Right cardiac atrium (tissue), 5 donors: ENCODE measurements at regions of chr16 and their contacts with region 1.

Region 1: GRCh38 chr16:8173111-8173644 is 417.1 kb downstream of the TMEM114 start:
- DNase-seq: peak; percentile 70 to 79 (median 77)
- ATAC-seq: peak in 1 of 2 donors; percentile 66
- H3K4me3 ChIP-seq: no peak overlapping the region
- H3K27ac ChIP-seq: no peak overlapping the region
- H3K4me1 ChIP-seq: no peaks in the 10 kb centered on the region
- H3K27me3 ChIP-seq: no peaks in the 10 kb centered on the region

Region 2: DNA sequence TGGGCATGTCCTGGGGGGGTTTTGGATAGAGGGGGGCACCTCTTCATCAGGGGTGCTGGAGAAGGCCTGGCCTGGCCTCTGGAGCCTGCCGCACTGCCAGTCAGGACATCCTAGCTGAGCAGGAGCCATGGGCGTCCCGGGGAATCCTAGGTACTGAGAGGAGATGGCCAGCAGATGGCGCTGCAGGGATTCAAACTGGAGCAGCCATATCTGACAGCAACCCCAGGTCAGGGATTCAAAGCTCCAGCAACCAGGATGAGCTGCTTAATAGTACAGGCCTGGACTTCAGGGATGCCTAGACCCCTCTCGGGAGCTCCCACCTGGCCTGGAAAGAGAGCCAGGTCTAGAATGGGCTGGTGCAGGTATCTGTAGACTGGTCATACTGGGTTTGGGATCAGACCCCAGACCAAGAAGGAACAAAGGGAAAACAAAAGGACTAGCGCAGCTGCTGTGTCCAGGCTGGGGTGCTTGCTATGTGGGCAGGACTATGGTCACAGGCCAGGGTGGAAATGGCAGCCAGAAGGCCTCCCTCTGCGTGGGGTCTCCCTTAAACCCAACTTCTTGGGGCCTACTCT is 1147.5 kb before region 1 on chr16:
- intact Hi-C with region 1: loop called in 1 of 4 experiments (anchors 5 kb)
- DNase-seq: peak; percentile 51 to 81 (median 73)
- ATAC-seq: peak; percentile 43 to 51
- H3K4me3 ChIP-seq: no peak overlapping the region
- H3K27ac ChIP-seq: no peak overlapping the region
- H3K4me1 ChIP-seq: no peaks in the 10 kb centered on the region
- H3K27me3 ChIP-seq: no peaks in the 10 kb centered on the region

Region 3: DNA sequence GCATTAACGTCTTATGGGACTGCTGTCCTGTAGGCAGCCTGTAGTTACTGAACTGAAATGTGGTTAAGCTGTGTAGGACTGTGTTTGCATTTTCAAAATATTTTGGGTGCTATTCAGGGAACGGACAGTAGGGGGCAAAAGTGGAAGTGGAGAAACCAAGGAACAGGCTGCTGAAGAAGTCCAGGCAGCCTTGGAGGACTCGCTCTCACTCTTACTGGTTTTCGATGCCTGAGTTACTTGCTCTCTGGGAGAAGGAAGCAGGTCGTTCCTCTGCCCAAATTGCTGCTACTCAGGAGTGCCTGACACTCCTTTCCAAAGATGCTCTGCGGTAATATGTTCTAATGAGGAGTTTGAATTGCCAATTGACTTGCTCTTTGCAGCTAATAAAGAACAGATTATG is 905.0 kb before region 1 on chr16:
- intact Hi-C with region 1: loop called in 1 of 4 experiments (anchors 10 kb)
- DNase-seq: peak in 1 of 3 donors; percentile 46
- ATAC-seq: peak in 1 of 2 donors; percentile 24
- H3K4me3 ChIP-seq: no peak overlapping the region
- H3K27ac ChIP-seq: no peak overlapping the region
- H3K4me1 ChIP-seq: no peaks in the 10 kb centered on the region
- H3K27me3 ChIP-seq: no peaks in the 10 kb centered on the region

Region 4: DNA sequence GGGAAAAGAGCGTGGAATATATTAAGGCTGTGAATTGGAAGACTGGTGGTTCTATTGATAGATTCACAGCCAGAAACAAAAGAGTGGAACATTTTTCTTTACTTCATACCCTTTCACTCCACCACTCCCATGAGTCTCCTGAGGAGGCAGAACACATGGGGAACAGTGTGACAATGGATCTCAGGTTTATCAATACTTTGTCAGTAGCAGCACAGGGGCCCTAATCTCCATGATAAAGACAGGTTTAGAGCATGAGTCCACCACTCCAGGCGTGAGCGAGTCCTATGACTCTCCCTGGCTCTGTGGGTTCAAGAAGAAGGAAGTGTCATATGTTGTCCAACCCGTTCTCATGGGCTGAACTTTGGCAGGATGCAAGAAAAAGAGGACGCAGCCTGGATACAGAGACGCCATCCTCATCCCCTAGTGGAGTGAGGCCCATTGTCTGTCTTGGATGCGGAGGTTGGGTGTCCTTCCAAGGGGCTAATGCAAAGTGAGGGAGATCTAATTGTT is 55.9 kb after region 1 on chr16:
- intact Hi-C with region 1: no loop called
- DNase-seq: no peak
- ATAC-seq: no peak
- H3K4me3 ChIP-seq: no peak overlapping the region
- H3K27ac ChIP-seq: no peak overlapping the region
- H3K4me1 ChIP-seq: no peaks in the 10 kb centered on the region
- H3K27me3 ChIP-seq: no peaks in the 10 kb centered on the region